Activated T-helper 2 cell treated with anti-CD3 and anti-CD28 coated beads, Interferon-gamma antibody, Interleukin-2, Interleukin-4, amounts not matched to agents 10 μg/mL and 5 μg/mL and 100 μg/mL, durations not matched to agents 14 hours and 24 hours and 36 hours (primary cell): ENCODE measurements at regions of chr6 and their contacts with region 1.

Region 1: DNA sequence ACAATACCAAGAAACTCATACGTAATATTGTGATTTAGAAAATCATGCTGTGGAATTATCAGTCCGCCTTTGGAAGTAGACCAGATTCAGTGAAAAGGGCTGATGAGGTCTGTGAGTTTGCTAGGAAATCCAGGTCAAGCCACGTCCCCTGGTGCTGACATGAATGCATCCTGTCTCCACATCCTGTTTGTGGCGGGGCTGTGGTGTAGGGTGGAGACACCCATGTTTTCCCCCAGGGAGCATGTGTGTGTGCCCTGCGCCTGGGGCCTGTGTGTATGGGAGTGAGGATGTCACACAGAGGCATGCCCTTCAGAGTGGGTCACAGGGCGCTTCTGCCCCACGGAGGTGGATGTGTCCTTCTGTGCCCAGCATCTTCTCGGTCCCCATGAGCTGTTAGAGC is 109.1 kb downstream of the SASH1 start:
- DNase-seq: peak; percentile 41
- H3K4me3 Mint-ChIP-seq: no peak overlapping the region
- H3K27ac Mint-ChIP-seq: no peak overlapping the region
- H3K4me1 Mint-ChIP-seq: peaks cover 25% of the 10 kb centered on the region
- H3K27me3 Mint-ChIP-seq: peaks cover 17% of the 10 kb centered on the region

Region 2: DNA sequence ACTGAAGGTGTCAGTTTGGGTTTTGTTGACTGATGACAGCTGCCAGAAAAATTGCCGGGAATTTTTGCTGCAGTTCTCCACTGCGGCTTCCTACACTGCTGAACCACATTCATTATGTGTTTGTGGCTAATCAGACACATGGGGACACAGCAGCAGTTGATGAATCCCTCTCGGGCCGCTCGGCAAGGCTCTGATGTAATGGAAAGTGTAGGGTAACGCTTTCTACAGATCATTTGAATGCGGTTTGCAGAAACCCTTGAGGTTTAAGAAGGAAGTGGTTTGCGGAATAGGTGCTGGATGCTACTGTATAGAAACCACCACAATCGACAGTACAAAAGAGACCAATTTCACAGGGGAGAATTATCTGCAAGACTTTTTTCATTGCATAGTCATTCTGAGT is 247.7 kb before region 1 on chr6:
- intact Hi-C with region 1: loop called (anchors 5 kb)
- DNase-seq: peak; percentile 74
- H3K4me3 Mint-ChIP-seq: no peak overlapping the region
- H3K27ac Mint-ChIP-seq: peak overlapping the region; percentile 58
- H3K4me1 Mint-ChIP-seq: peaks cover 22% of the 10 kb centered on the region
- H3K27me3 Mint-ChIP-seq: peaks cover 74% of the 10 kb centered on the region

Region 3: GRCh38 chr6:148423601-148424270 is 28.0 kb before region 1 on chr6:
- intact Hi-C with region 1: no loop called
- DNase-seq: no peak
- H3K4me3 Mint-ChIP-seq: no peak overlapping the region
- H3K27ac Mint-ChIP-seq: no peak overlapping the region
- H3K4me1 Mint-ChIP-seq: no peaks in the 10 kb centered on the region
- H3K27me3 Mint-ChIP-seq: peaks cover 2% of the 10 kb centered on the region